ENCODE measurements at regions of chr11 and their contacts with region 1.

Region 1: GRCh38 chr11:11028017-11028692 is 170.3 kb upstream of the ZBED5 start:
- DNase-seq: peak; percentile 52
- H3K4me3 ChIP-seq: no peak overlapping the region
- H3K27ac ChIP-seq: no peak overlapping the region
- H3K4me1 ChIP-seq: peaks cover 8% of the 10 kb centered on the region
- H3K27me3 ChIP-seq: peaks cover 4 to 6% of the 10 kb centered on the region in 2 experiments
- CTCF ChIP-seq: peak; percentile 70 to 81
- POLR2A ChIP-seq: no peak

Region 2: DNA sequence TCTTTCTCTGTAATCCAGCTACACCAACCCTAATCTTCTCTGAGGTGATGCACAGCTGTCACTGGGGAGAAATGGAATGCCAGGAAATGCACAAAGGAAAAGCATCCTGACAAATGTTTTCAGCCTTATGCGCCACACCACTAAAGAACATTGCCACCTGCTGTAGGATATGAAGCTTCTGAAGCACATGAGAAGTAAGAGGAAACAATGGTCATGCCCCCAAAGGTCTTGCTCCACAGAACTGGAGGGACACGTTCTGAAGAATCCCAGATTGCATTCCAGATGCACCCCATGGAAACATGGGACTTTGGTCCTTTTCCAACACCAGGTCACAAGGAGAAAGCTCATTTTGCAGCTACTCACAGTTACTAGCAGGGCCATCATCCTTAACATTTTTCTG is 121.6 kb before region 1 on chr11:
- CTCF ChIA-PET with region 1: no interaction called
- POLR2A ChIA-PET with region 1: no interaction called
- dilution Hi-C with region 1: no loop called
- intact Hi-C with region 1: no loop called
- DNase-seq: peak; percentile 21
- H3K4me3 ChIP-seq: no peak overlapping the region
- H3K27ac ChIP-seq: no peak overlapping the region
- H3K4me1 ChIP-seq: peaks cover 10% of the 10 kb centered on the region
- H3K27me3 ChIP-seq: no peaks in the 10 kb centered on the region
- CTCF ChIP-seq: no peak
- POLR2A ChIP-seq: no peak

Region 3: DNA sequence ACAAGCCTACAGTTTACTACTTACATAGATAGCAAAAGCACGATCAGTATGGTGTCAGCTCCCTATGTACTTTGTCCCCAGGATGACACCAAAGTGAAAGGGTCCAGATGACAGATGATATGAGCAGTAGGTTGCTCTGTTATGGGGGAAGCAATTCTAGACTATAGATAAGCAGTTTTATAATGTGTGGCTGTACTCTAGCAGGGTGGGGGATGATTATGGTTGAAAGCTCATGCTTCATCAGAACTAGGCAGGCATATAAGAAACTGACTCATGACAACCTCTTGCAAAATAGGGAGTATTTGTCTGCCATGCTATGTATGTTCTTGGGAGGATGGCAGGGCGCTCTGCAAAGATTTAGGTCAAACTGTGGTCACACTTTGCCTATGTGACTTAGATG is 12.1 kb before region 1 on chr11:
- CTCF ChIA-PET with region 1: interaction called, 13 read pairs
- POLR2A ChIA-PET with region 1: no interaction called
- dilution Hi-C with region 1: no loop called
- intact Hi-C with region 1: no loop called
- DNase-seq: no peak
- H3K4me3 ChIP-seq: no peak overlapping the region
- H3K27ac ChIP-seq: no peak overlapping the region
- H3K4me1 ChIP-seq: no peaks in the 10 kb centered on the region
- H3K27me3 ChIP-seq: peaks cover 10 to 24% of the 10 kb centered on the region in 2 experiments
- CTCF ChIP-seq: no peak
- POLR2A ChIP-seq: no peak

Region 4: DNA sequence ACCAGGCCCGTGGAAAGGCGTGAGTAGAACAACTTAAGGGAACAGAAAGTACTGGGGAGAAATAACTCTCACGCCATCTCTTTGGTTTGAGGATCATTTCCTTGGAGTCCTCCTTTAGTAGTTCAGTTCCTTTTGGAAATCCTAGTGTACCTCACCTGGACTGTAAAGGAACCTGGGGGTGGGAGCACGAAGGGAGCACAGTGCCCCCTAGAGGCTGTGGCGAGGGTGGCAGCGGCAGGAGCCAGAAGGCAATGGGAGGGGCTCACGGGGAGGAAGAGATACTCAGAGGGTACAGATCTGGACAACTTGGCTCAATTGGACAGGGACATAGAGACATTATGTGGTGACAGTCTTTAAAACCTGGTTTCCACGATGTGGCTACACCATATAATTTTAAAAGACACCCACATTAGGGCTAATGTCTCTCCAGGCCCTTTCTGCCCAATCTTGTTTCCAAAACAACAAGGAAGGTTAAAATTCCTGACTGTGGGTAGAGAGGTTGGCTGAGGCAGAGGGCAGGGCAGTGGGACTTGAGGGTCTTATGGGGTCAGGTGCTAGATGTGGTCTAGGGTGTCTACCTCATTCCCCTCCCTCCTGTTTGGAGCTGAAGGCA is 237.9 kb after region 1 on chr11:
- CTCF ChIA-PET with region 1: interaction called, 3 read pairs
- POLR2A ChIA-PET with region 1: no interaction called
- dilution Hi-C with region 1: no loop called
- intact Hi-C with region 1: loop called (anchors 5 kb)
- DNase-seq: no peak
- H3K4me3 ChIP-seq: no peak overlapping the region
- H3K27ac ChIP-seq: no peak overlapping the region
- H3K4me1 ChIP-seq: no peaks in the 10 kb centered on the region
- H3K27me3 ChIP-seq: no peaks in the 10 kb centered on the region
- CTCF ChIP-seq: peak; percentile 65 to 84
- POLR2A ChIP-seq: no peak

Region 5: DNA sequence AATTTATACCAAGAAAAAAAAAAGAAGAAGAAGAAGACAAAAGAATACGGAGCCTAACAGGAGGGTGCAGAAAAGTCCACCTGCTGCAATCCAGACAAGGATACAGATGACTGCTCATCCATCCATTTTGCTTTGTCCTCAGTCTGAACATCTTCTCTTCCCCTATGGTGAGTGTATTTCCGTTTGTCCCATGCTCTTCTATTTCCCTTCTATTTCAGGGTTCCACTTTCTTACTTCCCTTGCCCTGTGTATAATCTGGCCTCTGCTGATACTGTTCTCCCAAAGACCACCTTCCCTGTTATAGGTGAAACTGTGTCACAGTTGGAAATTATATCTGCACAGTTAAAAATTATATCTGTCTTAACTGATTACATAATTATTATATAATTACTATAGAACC is 764.9 kb after region 1 on chr11:
- CTCF ChIA-PET with region 1: interaction called, 227 read pairs
- POLR2A ChIA-PET with region 1: no interaction called
- dilution Hi-C with region 1: no loop called
- intact Hi-C with region 1: no loop called
- DNase-seq: no peak
- H3K4me3 ChIP-seq: no peak overlapping the region
- H3K27ac ChIP-seq: no peak overlapping the region
- H3K4me1 ChIP-seq: no peaks in the 10 kb centered on the region
- H3K27me3 ChIP-seq: peaks cover 12 to 14% of the 10 kb centered on the region in 2 experiments
- CTCF ChIP-seq: no peak
- POLR2A ChIP-seq: no peak

Measured in endothelial cell of umbilical vein (primary cell).